ENCODE measurements at regions of chr2 and their contacts with region 1.

Region 1: GRCh38 chr2:225041851-225042799 is at the start of gene DOCK10:
- DNase-seq: peak; percentile 75
- ATAC-seq: peak; percentile 48
- H3K4me3 Mint-ChIP-seq: peak within 1 kb of the TSS; percentile 95
- H3K27ac Mint-ChIP-seq: peak within 1 kb of the TSS; percentile 96
- H3K4me1 Mint-ChIP-seq: peaks cover 35% of the 10 kb centered on the region
- H3K27me3 Mint-ChIP-seq: peaks cover 20% of the 10 kb centered on the region
- total RNA-seq, gene DOCK10: 259 to 273 TPM

Region 2: GRCh38 chr2:225052703-225053102 is 10.6 kb after region 1 on chr2:
- POLR2A ChIA-PET with region 1: interaction called, 134 read pairs
- DNase-seq: no peak
- ATAC-seq: peak; percentile 92
- H3K4me3 Mint-ChIP-seq: peak overlapping the region; percentile 62
- H3K27ac Mint-ChIP-seq: peak overlapping the region; percentile 89
- H3K4me1 Mint-ChIP-seq: peaks cover 54% of the 10 kb centered on the region
- H3K27me3 Mint-ChIP-seq: no peaks in the 10 kb centered on the region

Region 3: GRCh38 chr2:225064362-225064761 is 22.2 kb after region 1 on chr2:
- POLR2A ChIA-PET with region 1: interaction called, 13 read pairs
- DNase-seq: no peak
- ATAC-seq: peak; percentile 92
- H3K4me3 Mint-ChIP-seq: peak overlapping the region; percentile 56
- H3K27ac Mint-ChIP-seq: peak overlapping the region; percentile 17
- H3K4me1 Mint-ChIP-seq: peaks cover 12% of the 10 kb centered on the region
- H3K27me3 Mint-ChIP-seq: no peaks in the 10 kb centered on the region